ENCODE measurements at regions of chr4 and their contacts with region 1.

Region 1: DNA sequence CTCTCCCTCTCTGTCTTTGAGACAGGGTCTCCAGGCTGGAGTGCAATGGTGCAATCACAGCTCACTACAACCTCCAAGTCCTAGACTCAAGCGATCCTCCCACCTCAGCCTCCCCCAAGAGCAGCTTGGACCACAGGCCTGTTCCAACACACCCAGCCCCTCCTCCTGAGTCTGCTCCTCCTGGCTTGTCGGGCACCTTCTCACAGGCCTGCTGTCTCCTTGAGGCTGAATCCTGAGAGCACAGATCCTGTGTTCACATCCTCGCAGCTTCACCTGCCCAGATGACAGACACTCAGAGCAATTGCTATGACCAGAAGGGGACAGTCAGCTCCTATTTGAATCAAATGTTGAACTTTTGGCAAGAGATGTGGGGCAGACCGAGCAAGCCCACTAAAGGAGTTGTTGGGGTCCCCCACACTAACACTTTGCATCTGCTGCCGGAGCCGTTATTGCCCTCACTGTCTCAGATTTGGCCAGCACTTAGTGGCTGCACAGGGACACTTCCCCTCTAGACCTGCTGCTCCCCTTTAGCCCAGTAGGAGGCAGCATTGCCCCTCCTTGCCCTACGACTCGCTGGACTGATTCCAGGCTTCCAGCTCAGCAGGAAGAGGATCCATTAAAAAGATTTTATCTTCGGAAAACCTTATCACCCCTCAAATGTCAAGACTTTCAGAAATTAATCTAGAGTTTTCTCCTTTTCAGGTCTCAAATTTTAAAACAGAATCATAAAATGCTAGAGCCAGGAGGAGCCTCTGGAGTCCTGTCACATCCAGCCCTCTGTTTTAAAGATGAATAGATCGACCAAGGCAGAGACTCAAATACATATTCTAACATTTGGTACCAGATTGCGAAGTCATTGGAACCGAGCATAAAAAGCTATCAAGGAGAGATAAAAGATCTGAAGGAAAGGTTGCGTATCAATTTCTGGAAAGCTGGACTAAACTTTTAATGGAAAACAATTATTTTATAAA is 113.7 kb downstream of the USP46 start:
- DNase-seq: peak; percentile 74 to 84 (median 82)
- H3K4me3 ChIP-seq: no peak overlapping the region
- H3K27ac ChIP-seq: no peak overlapping the region
- H3K4me1 ChIP-seq: peaks cover 9% of the 10 kb centered on the region
- H3K27me3 ChIP-seq: no peaks in the 10 kb centered on the region
- CTCF ChIP-seq: peak; percentile 49 to 83 (median 74)
- EP300 ChIP-seq: no peak
- POLR2A ChIP-seq: no peak

Region 2: DNA sequence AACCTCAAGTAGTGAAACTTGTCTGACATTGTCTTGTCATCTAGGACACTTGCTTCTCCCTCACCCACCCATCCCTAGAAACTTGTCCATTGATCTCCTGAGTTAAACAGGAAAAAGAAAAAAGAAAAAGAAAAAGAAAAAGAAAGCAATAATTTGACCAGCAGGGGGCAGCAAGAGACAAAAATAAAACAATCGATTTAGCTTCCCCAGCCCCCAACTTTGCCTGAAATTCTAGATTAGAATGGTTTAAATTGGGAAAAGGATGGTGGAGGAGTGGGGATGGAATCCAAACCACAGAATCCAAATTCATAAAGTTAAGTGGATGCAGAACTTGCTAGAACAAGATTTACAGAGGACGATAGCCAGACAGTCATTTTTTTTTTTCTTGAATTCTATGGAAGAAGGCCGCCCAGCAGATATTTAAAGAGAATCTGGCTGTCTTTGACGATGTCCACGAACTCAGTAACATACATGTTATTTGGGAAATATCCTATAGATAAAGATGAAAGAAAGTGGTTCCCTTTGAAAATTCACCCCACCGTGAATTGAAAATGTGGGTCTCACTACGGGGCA is 169.2 kb before region 1 on chr4:
- intact Hi-C with region 1: no loop called
- DNase-seq: peak in 3 of 5 donors; percentile 17 to 43 (median 32)
- H3K4me3 ChIP-seq: no peak overlapping the region
- H3K27ac ChIP-seq: no peak overlapping the region
- H3K4me1 ChIP-seq: no peaks in the 10 kb centered on the region
- H3K27me3 ChIP-seq: no peaks in the 10 kb centered on the region
- CTCF ChIP-seq: peak; percentile 32 to 67 (median 56)
- EP300 ChIP-seq: no peak
- POLR2A ChIP-seq: no peak

Region 3: GRCh38 chr4:52701207-52701606 is 155.8 kb after region 1 on chr4:
- intact Hi-C with region 1: loop called in 1 of 4 experiments (anchors 10 kb)
- DNase-seq: no peak
- H3K4me3 ChIP-seq: no peak overlapping the region
- H3K27ac ChIP-seq: no peak overlapping the region
- H3K4me1 ChIP-seq: peaks cover 3% of the 10 kb centered on the region
- H3K27me3 ChIP-seq: no peaks in the 10 kb centered on the region
- CTCF ChIP-seq: no peak
- EP300 ChIP-seq: no peak
- POLR2A ChIP-seq: no peak

Measured in ovary (tissue), 10 donors.